Stomach (tissue), 19 donors: ENCODE measurements at regions of chr7 and their contacts with region 1.

Region 1: GRCh38 chr7:91089382-91089963 is 174.8 kb upstream of the FZD1 start:
- DNase-seq: peak in 1 of 2 donors; percentile 70
- H3K4me3 ChIP-seq: peak overlapping the region in 2 of 4 donors; percentile 19 to 27
- H3K27ac ChIP-seq: no peak overlapping the region
- H3K4me1 ChIP-seq: peaks cover 0 to 6% (median 0%) of the 10 kb centered on the region in 4 donors
- H3K27me3 ChIP-seq: no peaks in the 10 kb centered on the region
- CTCF ChIP-seq: peak in 5 of 7 experiments; percentile 25 to 70 (median 55)
- EP300 ChIP-seq: no peak
- POLR2A ChIP-seq: no peak

Region 2: GRCh38 chr7:91636129-91636724 is 546.8 kb after region 1 on chr7:
- intact Hi-C with region 1: loop called (anchors 10 kb)
- DNase-seq: peak in 1 of 2 donors; percentile 35
- H3K4me3 ChIP-seq: no peak overlapping the region
- H3K27ac ChIP-seq: no peak overlapping the region
- H3K4me1 ChIP-seq: no peaks in the 10 kb centered on the region
- H3K27me3 ChIP-seq: no peaks in the 10 kb centered on the region
- CTCF ChIP-seq: peak in 5 of 7 experiments; percentile 41 to 73 (median 55)
- EP300 ChIP-seq: no peak
- POLR2A ChIP-seq: no peak